ENCODE measurements at regions of chr12 and their contacts with region 1.

Region 1: GRCh38 chr12:26651566-26652188 is 181.3 kb downstream of the ITPR2 start:
- DNase-seq: peak; percentile 65 to 88
- H3K4me3 ChIP-seq: no peak overlapping the region
- H3K4me3 Mint-ChIP-seq: no peak overlapping the region
- H3K27ac Mint-ChIP-seq: no peak overlapping the region
- H3K4me1 ChIP-seq: peaks cover 23% of the 10 kb centered on the region
- H3K4me1 Mint-ChIP-seq: peaks cover 32% of the 10 kb centered on the region
- H3K27me3 ChIP-seq: no peaks in the 10 kb centered on the region
- H3K27me3 Mint-ChIP-seq: no peaks in the 10 kb centered on the region
- CTCF ChIP-seq: peak; percentile 88 to 99

Region 2: DNA sequence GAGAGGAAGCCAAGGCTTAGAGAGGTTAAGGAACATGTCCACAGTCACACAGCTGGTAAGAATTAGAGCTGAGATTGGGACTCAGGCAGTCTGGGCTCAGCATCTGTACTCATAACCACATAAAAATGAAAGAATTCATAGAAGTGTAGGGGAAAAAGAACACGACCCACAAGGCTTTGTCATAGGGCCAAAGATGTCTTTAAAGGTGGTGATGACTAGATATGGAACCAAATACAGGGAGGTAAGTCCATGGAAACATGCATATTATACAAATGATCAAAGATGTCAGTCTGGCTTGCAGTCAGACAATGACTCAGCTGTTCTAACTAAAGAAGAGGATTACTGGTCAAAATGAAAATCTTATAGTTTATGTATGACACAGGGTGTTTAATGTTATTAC is 463.6 kb before region 1 on chr12:
- CTCF ChIA-PET with region 1: no interaction called
- POLR2A ChIA-PET with region 1: no interaction called
- intact Hi-C with region 1: loop called (anchors 1 kb)
- DNase-seq: no peak
- H3K4me3 ChIP-seq: no peak overlapping the region
- H3K4me3 Mint-ChIP-seq: no peak overlapping the region
- H3K27ac Mint-ChIP-seq: no peak overlapping the region
- H3K4me1 ChIP-seq: no peaks in the 10 kb centered on the region
- H3K4me1 Mint-ChIP-seq: peaks cover 6% of the 10 kb centered on the region
- H3K27me3 ChIP-seq: no peaks in the 10 kb centered on the region
- H3K27me3 Mint-ChIP-seq: no peaks in the 10 kb centered on the region
- CTCF ChIP-seq: no peak

Region 3: GRCh38 chr12:26434299-26435068 is 217.2 kb before region 1 on chr12:
- CTCF ChIA-PET with region 1: interaction called, 8 read pairs
- POLR2A ChIA-PET with region 1: no interaction called
- intact Hi-C with region 1: loop called (anchors 1 kb)
- DNase-seq: peak; percentile 72 to 77
- H3K4me3 ChIP-seq: no peak overlapping the region
- H3K4me3 Mint-ChIP-seq: peak overlapping the region; percentile 16
- H3K27ac Mint-ChIP-seq: peak overlapping the region; percentile 45
- H3K4me1 ChIP-seq: peaks cover 27% of the 10 kb centered on the region
- H3K4me1 Mint-ChIP-seq: peaks cover 17% of the 10 kb centered on the region
- H3K27me3 ChIP-seq: no peaks in the 10 kb centered on the region
- H3K27me3 Mint-ChIP-seq: no peaks in the 10 kb centered on the region
- CTCF ChIP-seq: peak; percentile 89 to 97

Region 4: DNA sequence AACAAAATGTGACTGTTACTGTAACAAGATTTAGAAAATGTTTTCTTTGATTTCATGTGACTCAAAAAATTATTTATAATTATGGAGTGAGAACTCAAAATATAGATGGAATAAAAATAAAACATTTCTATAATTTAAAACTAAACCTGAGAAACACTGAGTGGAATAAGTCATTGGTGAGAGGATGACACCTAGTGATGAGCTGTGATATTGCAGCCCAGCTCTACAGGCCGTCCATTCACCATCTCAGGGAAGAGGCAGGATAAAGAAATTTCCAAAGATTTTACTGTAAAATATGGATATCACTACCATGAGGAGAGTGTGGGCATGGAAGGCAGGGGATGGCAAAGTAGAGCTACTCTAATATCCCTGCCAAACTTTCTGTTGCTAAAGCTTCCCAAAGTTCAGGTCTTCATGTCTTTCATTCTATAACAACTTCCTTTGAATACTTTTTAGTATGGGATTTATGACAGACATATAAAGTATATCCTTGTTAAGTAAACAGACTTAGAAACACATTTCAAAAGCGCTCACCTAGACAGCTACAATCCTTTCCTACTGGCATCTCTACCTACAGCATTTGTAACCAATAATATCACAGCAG is 126.7 kb before region 1 on chr12:
- CTCF ChIA-PET with region 1: no interaction called
- POLR2A ChIA-PET with region 1: no interaction called
- intact Hi-C with region 1: loop called (anchors 5 kb)
- DNase-seq: peak in 1 of 2 experiments; percentile 60
- H3K4me3 ChIP-seq: no peak overlapping the region
- H3K4me3 Mint-ChIP-seq: no peak overlapping the region
- H3K27ac Mint-ChIP-seq: no peak overlapping the region
- H3K4me1 ChIP-seq: 0 out of 2 replicates have a peak, but pooled peaks cover 6% of the 10 kb centered on the region
- H3K4me1 Mint-ChIP-seq: peaks cover 14% of the 10 kb centered on the region
- H3K27me3 ChIP-seq: no peaks in the 10 kb centered on the region
- H3K27me3 Mint-ChIP-seq: no peaks in the 10 kb centered on the region
- CTCF ChIP-seq: peak; percentile 46 to 87

Measured in Caco-2 (cell line).